Esophagus squamous epithelium (tissue), 5 donors: ENCODE measurements at regions of chr12 and their contacts with region 1.

Region 1: DNA sequence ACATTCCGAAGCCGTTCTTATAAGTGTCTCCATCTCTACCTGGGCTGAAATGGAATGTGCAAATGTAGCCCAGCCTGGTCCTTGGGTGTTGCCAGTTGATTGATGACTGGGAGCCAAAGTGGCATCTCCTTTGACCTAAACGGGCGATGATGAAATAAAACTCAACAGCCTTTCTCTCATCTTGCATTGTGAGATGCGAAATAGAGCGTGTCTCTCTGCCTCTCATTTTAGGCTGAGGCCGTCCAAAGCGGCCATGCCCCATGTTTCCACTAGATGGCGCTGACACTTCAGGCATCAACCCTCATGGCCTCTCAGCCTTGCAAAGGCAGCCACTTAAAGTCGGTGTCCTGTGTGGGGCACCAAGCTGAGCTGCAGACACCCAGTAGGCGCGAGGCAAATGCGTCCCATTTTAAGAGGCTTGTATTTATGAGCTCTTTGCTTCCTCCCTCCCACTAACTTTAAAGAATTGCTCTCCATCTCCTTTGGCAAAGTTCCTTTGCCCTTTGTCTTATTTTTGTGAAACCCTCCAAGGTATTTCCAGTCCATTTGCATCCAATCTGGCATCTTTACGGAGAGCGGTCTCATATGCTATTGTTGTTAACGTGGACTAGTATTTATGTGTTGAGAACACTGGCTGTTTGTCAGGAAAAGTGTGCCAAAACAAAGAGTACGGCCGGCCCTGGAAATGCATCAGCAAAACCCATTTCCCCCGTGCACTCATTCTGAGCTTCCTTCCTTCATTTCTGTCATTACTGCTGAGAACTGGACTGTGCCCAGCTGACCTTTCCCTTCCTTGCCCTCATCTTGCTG is 25.0 kb downstream of the GPRC5A start:
- DNase-seq: peak; percentile 18
- H3K4me3 ChIP-seq: peak overlapping the region in 1 of 4 donors; percentile 42
- H3K27ac ChIP-seq: peak overlapping the region in 3 of 4 donors; percentile 43 to 71 (median 65)
- H3K4me1 ChIP-seq: peaks cover 0 to 15% (median 12%) of the 10 kb centered on the region in 3 donors
- H3K27me3 ChIP-seq: no peaks in the 10 kb centered on the region
- CTCF ChIP-seq: peak; percentile 86 to 99 (median 97)
- POLR2A ChIP-seq: no peak

Region 2: GRCh38 chr12:12983420-12984035 is 67.2 kb after region 1 on chr12:
- intact Hi-C with region 1: loop called (anchors 10 kb)
- DNase-seq: no peak
- H3K4me3 ChIP-seq: no peak overlapping the region
- H3K27ac ChIP-seq: peak overlapping the region in 1 of 4 donors; percentile 11
- H3K4me1 ChIP-seq: peaks cover 0 to 26% (median 11%) of the 10 kb centered on the region in 3 donors
- H3K27me3 ChIP-seq: no peaks in the 10 kb centered on the region
- CTCF ChIP-seq: peak in 5 of 6 experiments; percentile 45 to 72 (median 58)
- POLR2A ChIP-seq: no peak

Region 3: GRCh38 chr12:13094347-13094746 is 178.0 kb after region 1 on chr12:
- intact Hi-C with region 1: loop called (anchors 10 kb)
- DNase-seq: no peak
- H3K4me3 ChIP-seq: no peak overlapping the region
- H3K27ac ChIP-seq: no peak overlapping the region
- H3K4me1 ChIP-seq: peaks cover 7 to 43% (median 21%) of the 10 kb centered on the region in 3 donors
- H3K27me3 ChIP-seq: no peaks in the 10 kb centered on the region
- CTCF ChIP-seq: no peak
- POLR2A ChIP-seq: no peak